Dendritic cell treated with granulocyte-macrophage colony-stimulating factor and Interleukin-4, amounts not matched to agents 40 ng/mL and 50 ng/mL, for 4 days (primary cell): ENCODE measurements at regions of chr18 and their contacts with region 1.

Region 1: GRCh38 chr18:35756506-35757117 is 175.1 kb downstream of the GALNT1 start:
- H3K4me3 Mint-ChIP-seq: no peak overlapping the region
- H3K27ac Mint-ChIP-seq: no peak overlapping the region
- H3K4me1 Mint-ChIP-seq: peaks cover 6% of the 10 kb centered on the region
- H3K27me3 Mint-ChIP-seq: peaks cover 1% of the 10 kb centered on the region

Region 2: DNA sequence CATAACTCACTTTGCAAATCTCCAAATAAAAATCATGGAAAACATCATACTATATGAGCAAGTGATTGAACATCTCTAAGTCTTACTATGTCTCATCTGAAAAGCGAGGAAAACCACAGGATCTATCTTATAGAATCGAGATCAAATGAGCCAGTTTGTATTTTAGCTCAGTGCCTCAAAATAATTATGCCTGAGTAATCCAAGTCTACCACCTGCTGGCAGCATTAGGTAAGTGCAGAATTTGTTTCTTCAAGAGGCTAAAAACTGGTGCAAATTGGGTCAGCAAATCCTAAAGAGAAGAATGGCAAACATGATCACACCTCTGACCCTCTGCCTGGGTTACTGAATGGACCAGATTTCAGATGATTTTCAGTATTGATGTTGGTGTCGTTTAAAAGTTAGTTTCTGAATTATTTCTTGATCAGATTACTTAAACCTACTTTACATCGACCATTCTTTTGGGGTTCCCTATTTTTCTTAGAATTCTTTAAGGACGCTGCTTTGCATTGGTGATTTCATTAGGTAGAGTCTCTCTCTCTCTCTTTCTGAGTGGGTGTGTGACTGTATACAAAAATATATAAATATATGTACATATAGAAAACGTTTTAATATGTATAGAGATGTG is 528.2 kb after region 1 on chr18:
- intact Hi-C with region 1: loop called (anchors 10 kb)
- H3K4me3 Mint-ChIP-seq: no peak overlapping the region
- H3K27ac Mint-ChIP-seq: no peak overlapping the region
- H3K4me1 Mint-ChIP-seq: no peaks in the 10 kb centered on the region
- H3K27me3 Mint-ChIP-seq: peaks cover 22% of the 10 kb centered on the region